MCF 10A (cell line): ENCODE measurements at regions of chr16 and their contacts with region 1.

Region 1: GRCh38 chr16:71894921-71895678 is at the start of gene IST1:
- DNase-seq: peak; percentile 98
- H3K4me3 Mint-ChIP-seq: peak within 1 kb of the TSS; percentile 87
- H3K27ac Mint-ChIP-seq: peak within 1 kb of the TSS; percentile 96
- H3K4me1 Mint-ChIP-seq: peaks cover 6% of the 10 kb centered on the region
- H3K27me3 Mint-ChIP-seq: no peaks in the 10 kb centered on the region
- CTCF ChIP-seq: no peak
- total RNA-seq, gene IST1: 127 TPM in 2 replicates

Region 2: DNA sequence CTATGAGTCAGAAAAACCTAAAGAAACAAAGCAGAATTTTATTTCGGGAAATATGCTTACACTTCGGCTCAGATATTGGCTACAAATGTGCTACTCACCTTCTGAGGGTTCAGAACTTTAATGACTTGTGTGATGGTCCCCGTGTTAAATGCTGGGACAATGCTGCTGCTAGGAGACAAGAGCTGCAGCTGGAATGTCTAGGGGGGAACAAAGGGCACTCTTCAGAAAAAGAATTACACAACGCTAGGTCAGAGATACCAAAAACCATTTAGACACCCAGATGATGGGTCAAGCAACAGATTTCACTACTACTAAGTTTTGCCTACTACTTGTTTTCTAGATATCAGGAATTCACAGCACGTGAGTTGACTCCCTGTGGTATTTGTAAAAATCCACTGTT is 160.6 kb before region 1 on chr16:
- CTCF ChIA-PET with region 1: no interaction called
- POLR2A ChIA-PET with region 1: no interaction called
- intact Hi-C with region 1: no loop called
- DNase-seq: no peak
- H3K4me3 Mint-ChIP-seq: no peak overlapping the region
- H3K27ac Mint-ChIP-seq: no peak overlapping the region
- H3K4me1 Mint-ChIP-seq: no peaks in the 10 kb centered on the region
- H3K27me3 Mint-ChIP-seq: no peaks in the 10 kb centered on the region
- CTCF ChIP-seq: no peak

Region 3: GRCh38 chr16:71845639-71846430 is 49.3 kb before region 1 on chr16 and contains the start of gene ATXN1L:
- CTCF ChIA-PET with region 1: interaction called, 3 read pairs
- POLR2A ChIA-PET with region 1: interaction called, 40 read pairs
- intact Hi-C with region 1: no loop called
- DNase-seq: peak; percentile 93
- H3K4me3 Mint-ChIP-seq: peak within 1 kb of the TSS; percentile 90
- H3K27ac Mint-ChIP-seq: peak within 1 kb of the TSS; percentile 98
- H3K4me1 Mint-ChIP-seq: peaks cover 22% of the 10 kb centered on the region
- H3K27me3 Mint-ChIP-seq: no peaks in the 10 kb centered on the region
- CTCF ChIP-seq: no peak
- total RNA-seq, gene ATXN1L: 18.2 and 20.4 TPM in 2 replicates

Region 4: DNA sequence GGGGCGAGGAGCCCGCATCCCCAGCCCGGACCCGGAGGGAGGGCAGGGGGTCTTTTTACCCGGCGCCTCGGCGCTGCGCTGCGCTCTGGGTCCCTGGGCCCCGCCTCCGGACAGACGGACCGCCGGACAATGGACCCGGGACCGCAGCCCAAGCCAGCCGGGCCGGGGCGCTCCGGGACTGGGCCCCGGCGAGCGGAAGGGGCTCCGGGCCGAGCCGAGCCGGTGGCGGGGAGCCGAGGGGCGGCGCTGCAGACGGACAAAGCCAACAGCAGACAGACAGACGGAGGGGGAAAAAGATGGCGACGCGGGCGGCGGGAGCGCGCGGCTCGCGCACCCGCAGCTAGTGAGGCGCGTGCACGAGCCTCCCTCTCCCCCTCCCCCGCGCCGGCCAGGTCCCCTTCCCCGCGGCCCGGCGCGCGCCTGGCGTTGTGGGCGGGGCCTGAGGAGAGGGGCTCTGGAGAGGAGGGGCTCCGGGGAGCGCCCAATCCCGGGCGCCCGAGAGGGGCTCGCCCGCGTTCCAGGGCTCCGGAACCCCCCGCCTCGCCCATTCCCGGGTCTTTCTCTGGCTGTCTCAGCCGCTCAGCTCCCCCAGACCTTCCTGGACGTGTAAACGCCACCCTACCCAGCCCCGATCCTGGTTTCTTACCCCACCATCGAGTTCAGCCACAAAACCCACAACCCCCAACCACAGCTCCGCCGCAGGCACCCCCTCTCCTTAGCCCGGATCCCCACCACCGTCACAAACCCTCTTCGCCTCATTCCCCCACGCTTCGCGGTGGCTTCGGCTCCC is 11.1 kb before region 1 on chr16 and contains the start of gene ZNF821:
- CTCF ChIA-PET with region 1: interaction called, 23 read pairs
- POLR2A ChIA-PET with region 1: interaction called, 141 read pairs
- intact Hi-C with region 1: no loop called
- DNase-seq: peak; percentile 56
- H3K4me3 Mint-ChIP-seq: peak within 1 kb of the TSS; percentile 86
- H3K27ac Mint-ChIP-seq: peak within 1 kb of the TSS; percentile 49
- H3K4me1 Mint-ChIP-seq: peaks cover 9% of the 10 kb centered on the region
- H3K27me3 Mint-ChIP-seq: no peaks in the 10 kb centered on the region
- CTCF ChIP-seq: peak; percentile 46
- total RNA-seq, gene ZNF821: 3.4 and 4.4 TPM in 2 replicates

Region 5: GRCh38 chr16:71919035-71919434 is 23.9 kb after region 1 on chr16:
- CTCF ChIA-PET with region 1: no interaction called
- POLR2A ChIA-PET with region 1: interaction called, 17 read pairs
- intact Hi-C with region 1: no loop called
- DNase-seq: no peak
- H3K4me3 Mint-ChIP-seq: no peak overlapping the region
- H3K27ac Mint-ChIP-seq: no peak overlapping the region
- H3K4me1 Mint-ChIP-seq: peaks cover 20% of the 10 kb centered on the region
- H3K27me3 Mint-ChIP-seq: no peaks in the 10 kb centered on the region
- CTCF ChIP-seq: no peak

Region 6: GRCh38 chr16:71927383-71927782 is 32.3 kb after region 1 on chr16:
- CTCF ChIA-PET with region 1: interaction called, 3 read pairs
- POLR2A ChIA-PET with region 1: interaction called, 39 read pairs
- intact Hi-C with region 1: no loop called
- DNase-seq: peak; percentile 92
- H3K4me3 Mint-ChIP-seq: peak overlapping the region; percentile 18
- H3K27ac Mint-ChIP-seq: peak overlapping the region; percentile 83
- H3K4me1 Mint-ChIP-seq: peaks cover 27% of the 10 kb centered on the region
- H3K27me3 Mint-ChIP-seq: no peaks in the 10 kb centered on the region
- CTCF ChIP-seq: no peak

Region 7: GRCh38 chr16:72093448-72094265 is 198.6 kb after region 1 on chr16 and contains the starts of genes DHX38 and TXNL4B:
- CTCF ChIA-PET with region 1: no interaction called
- POLR2A ChIA-PET with region 1: interaction called, 11 read pairs
- intact Hi-C with region 1: loop called (anchors 10 kb)
- DNase-seq: peak; percentile 99
- H3K4me3 Mint-ChIP-seq: peak within 1 kb of the TSS; percentile 99
- H3K27ac Mint-ChIP-seq: peak within 1 kb of the TSS; percentile 93
- H3K4me1 Mint-ChIP-seq: peaks cover 38% of the 10 kb centered on the region
- H3K27me3 Mint-ChIP-seq: no peaks in the 10 kb centered on the region
- CTCF ChIP-seq: no peak
- total RNA-seq, gene DHX38: 65.2 and 75.2 TPM in 2 replicates
- total RNA-seq, gene TXNL4B: 17.4 and 18.6 TPM in 2 replicates